Sciatic nerve (tissue), 2 donors: ENCODE measurements at regions of chr6 and their contacts with region 1.

Region 1: DNA sequence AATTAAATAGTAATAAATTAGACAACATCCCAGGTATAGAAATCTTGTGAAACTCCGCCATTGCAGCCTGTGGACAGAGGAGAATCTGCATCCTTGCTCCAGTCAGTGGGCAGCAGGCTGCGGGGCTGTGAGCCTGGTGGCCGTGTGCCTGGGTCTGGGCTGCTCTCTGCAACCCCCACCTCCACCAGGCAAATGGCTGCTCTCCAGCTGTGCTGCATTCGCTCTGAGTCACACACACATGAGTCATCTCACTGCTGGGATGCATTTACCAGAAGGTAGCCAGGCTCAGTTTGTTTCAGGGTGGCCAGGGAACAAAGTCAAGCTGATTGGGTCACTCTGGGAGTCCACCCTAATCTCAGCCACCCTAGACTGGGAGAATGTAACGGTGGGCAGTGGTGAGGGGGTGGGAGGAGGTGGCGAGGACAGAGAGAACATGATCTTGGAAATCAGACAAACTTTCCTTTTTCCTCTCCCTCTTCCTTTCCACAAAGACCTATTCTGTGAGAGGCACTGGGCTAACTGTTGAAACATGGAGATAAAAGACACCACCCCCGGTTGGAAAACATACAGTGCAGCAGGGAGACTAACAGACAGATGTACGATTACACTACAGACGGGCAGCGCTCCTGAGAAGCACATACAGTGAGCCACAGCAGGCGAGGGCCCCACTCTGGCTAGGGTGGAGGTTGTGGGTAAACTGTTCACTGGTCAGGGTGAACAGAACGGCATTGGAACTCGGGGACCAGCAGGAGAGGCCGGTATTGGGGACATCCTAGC is 59.2 kb downstream of the TRAM2 start:
- DNase-seq: peak; percentile 88
- ATAC-seq: peak; percentile 82

Region 2: DNA sequence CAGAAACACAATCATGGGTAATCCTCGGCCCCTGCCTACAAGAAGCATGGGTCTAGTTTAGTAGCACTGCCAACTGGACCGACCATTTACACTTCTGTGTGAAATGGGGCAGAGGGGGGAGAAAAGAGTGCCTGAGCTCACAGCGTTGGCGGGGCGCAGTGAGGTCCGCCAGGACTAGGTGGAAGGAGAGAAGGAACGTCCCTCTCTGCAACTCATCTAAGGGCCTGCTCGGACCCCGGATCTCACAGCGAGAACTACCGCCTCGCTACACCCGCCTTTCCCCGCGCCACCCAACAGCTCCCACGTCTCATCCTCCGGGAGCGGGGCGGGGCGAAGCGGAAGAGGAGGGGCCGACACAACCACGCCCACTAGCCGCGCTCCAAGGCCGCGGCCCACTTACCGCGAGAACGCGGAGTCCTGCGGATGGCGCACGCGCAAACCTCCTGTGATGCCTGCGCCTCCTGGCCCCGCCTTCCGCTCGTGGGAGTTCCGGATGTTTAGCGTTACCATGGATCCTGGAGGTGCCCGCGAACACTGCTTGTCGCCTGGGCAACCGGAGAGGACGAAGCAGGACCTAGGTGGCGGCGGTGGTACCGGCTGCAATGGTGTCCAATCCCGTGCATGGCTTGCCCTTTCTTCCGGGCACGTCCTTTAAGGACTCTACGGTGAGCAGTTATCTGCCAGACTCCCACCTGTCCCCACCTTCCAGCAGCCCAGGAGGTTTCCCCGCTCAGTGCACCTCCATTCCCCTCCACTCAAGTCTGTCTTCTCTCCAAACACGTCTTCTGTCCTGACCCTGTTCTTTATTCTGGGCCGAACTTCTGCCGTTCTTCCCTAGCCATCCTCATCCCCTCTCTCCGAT is 97.7 kb before region 1 on chr6 and contains the start of gene EFHC1:
- intact Hi-C with region 1: no loop called
- DNase-seq: peak; percentile 99
- ATAC-seq: peak; percentile 98
- total RNA-seq, gene EFHC1: 38.7 TPM

Region 3: GRCh38 chr6:52475307-52475706 is 42.4 kb before region 1 on chr6:
- intact Hi-C with region 1: no loop called
- DNase-seq: no peak
- ATAC-seq: no peak

Region 4: GRCh38 chr6:52577022-52577777 is 59.5 kb after region 1 on chr6 and contains the start of gene TRAM2:
- intact Hi-C with region 1: loop called (anchors 10 kb)
- DNase-seq: peak; percentile 89
- ATAC-seq: peak; percentile 77
- total RNA-seq, gene TRAM2: 18.6 TPM

Region 5: GRCh38 chr6:52691718-52692117 is 174.0 kb after region 1 on chr6:
- intact Hi-C with region 1: no loop called
- DNase-seq: no peak
- ATAC-seq: no peak